ENCODE measurements at regions of chr13 and their contacts with region 1.

Region 1: GRCh38 chr13:32586080-32586900 is at the start of gene PDS5B:
- DNase-seq: peak; percentile 96
- ATAC-seq: peak; percentile 93
- H3K4me3 Mint-ChIP-seq: peak within 1 kb of the TSS; percentile 96
- H3K27ac Mint-ChIP-seq: peak within 1 kb of the TSS; percentile 94
- H3K4me1 Mint-ChIP-seq: peaks cover 39% of the 10 kb centered on the region
- H3K27me3 Mint-ChIP-seq: peaks cover 7% of the 10 kb centered on the region
- total RNA-seq, gene PDS5B: 57.6 to 64.6 TPM

Region 2: DNA sequence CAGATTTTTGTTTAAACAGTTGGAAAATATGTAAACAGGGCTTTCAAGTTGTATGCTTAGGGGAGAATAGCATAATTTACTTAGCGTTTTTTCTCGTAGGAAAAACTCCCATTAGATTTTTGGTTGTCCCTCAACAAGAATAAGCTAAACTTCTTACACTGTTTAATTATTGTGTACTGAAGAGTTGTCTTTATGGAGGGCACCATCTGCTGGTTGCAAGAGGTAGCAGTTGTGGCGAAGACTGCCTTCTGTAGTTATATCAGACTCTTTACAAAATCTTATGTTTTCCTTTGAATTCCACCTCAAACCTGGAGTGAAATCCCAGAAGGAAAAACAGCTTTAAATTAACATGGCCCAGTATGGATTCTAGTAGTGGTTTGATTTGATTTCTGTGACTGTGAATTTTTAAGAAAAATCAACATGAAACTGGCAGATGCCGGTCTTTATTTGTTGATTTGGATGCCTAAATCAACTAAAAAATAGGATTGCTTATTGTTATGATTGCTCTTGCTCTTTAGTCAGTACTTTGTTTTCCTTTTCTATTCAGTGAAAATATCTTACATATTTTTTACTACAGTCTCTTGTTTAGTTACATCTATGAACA is 53.3 kb after region 1 on chr13:
- CTCF ChIA-PET with region 1: interaction called, 20 read pairs
- DNase-seq: peak; percentile 61
- ATAC-seq: peak; percentile 80
- H3K4me3 Mint-ChIP-seq: no peak overlapping the region
- H3K27ac Mint-ChIP-seq: no peak overlapping the region
- H3K4me1 Mint-ChIP-seq: peaks cover 31% of the 10 kb centered on the region
- H3K27me3 Mint-ChIP-seq: no peaks in the 10 kb centered on the region

Region 3: GRCh38 chr13:32650705-32651311 is 64.5 kb after region 1 on chr13:
- CTCF ChIA-PET with region 1: interaction called, 29 read pairs
- DNase-seq: peak; percentile 77
- ATAC-seq: peak; percentile 86
- H3K4me3 Mint-ChIP-seq: no peak overlapping the region
- H3K27ac Mint-ChIP-seq: no peak overlapping the region
- H3K4me1 Mint-ChIP-seq: peaks cover 29% of the 10 kb centered on the region
- H3K27me3 Mint-ChIP-seq: no peaks in the 10 kb centered on the region

Region 4: DNA sequence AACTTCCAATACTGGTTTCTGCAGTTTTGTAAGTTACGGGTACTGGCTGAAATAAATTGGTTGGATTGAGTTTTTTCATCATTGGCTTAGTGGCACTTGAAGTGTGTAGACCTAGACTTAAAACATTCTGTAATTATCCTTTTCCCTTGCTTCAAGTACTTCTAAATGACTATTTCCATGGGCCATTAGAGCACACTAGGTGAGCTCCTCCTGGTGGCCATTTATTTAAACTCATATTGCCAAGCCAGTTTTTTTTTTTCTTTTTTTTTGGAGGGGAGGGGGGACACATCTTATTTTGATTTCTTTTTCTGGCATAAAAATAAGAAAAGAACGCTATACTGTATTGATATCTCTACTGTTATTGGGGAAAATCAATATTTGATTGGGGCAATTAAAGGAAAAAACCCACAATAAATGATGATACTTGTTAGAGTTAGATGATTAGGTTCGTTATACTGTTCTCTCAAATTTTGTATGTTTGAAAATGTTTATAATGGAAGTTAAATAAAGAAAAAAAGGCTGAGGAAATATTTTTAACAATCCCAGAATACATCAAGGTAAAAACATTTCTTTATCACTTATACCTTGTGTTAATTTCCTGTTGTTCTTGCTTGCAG is 82.8 kb after region 1 on chr13:
- CTCF ChIA-PET with region 1: interaction called, 18 read pairs
- DNase-seq: no peak
- ATAC-seq: no peak
- H3K4me3 Mint-ChIP-seq: no peak overlapping the region
- H3K27ac Mint-ChIP-seq: no peak overlapping the region
- H3K4me1 Mint-ChIP-seq: no peaks in the 10 kb centered on the region
- H3K27me3 Mint-ChIP-seq: no peaks in the 10 kb centered on the region